Activated B cell treated with CpG ODN at 0.5 μM for 24 hours (primary cell): ENCODE measurements at regions of chr11 and their contacts with region 1.

Region 1: DNA sequence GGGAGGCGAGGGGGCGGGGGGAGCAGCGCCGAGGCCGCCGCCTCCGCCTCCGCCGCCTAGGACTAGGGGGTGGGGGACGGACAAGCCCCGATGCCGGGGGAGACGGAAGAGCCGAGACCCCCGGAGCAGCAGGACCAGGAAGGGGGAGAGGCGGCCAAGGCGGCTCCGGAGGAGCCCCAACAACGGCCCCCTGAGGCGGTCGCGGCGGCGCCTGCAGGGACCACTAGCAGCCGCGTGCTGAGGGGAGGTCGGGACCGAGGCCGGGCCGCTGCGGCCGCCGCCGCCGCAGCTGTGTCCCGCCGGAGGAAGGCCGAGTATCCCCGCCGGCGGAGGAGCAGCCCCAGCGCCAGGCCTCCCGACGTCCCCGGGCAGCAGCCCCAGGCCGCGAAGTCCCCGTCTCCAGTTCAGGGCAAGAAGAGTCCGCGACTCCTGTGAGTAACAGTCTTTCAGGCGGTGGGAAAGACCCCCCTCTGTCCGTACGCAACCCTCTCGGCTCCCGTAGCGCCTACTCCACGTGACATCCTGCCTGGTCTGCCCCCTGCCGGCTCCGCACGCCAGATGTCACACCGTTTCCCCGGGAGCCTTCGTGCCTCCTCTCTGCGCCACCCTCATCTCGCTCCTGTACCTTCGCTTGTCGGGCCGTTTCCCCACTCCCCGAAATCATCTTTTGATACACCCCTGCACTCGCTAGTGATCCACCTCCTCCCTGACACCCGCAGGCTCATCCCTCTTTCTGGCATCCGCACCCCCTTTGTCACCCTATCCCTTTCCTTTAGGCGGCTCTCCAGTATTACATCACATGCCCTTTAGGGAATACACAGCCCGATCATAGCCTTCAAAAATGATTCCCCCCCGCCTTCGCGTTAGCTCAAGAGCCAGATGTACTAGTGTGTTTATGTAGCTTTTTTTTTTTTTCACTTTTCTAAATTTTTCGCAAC is 598 bp downstream of the ZFP91 start:
- DNase-seq: peak; percentile 87
- ATAC-seq: peak; percentile 33
- H3K4me3 Mint-ChIP-seq: peak overlapping the region; percentile 96
- H3K27ac Mint-ChIP-seq: peak overlapping the region; percentile 100
- H3K4me1 Mint-ChIP-seq: peaks cover 79% of the 10 kb centered on the region
- H3K27me3 Mint-ChIP-seq: no peaks in the 10 kb centered on the region
- CTCF ChIP-seq: no peak

Region 2: GRCh38 chr11:57345555-57346211 is 1233.8 kb before region 1 on chr11:
- CTCF ChIA-PET with region 1: no interaction called
- POLR2A ChIA-PET with region 1: no interaction called
- intact Hi-C with region 1: loop called (anchors 5 kb)
- DNase-seq: peak; percentile 40
- ATAC-seq: peak; percentile 91
- H3K4me3 Mint-ChIP-seq: no peak overlapping the region
- H3K27ac Mint-ChIP-seq: no peak overlapping the region
- H3K4me1 Mint-ChIP-seq: peaks cover 3% of the 10 kb centered on the region
- H3K27me3 Mint-ChIP-seq: peaks cover 3% of the 10 kb centered on the region
- CTCF ChIP-seq: no peak

Region 3: DNA sequence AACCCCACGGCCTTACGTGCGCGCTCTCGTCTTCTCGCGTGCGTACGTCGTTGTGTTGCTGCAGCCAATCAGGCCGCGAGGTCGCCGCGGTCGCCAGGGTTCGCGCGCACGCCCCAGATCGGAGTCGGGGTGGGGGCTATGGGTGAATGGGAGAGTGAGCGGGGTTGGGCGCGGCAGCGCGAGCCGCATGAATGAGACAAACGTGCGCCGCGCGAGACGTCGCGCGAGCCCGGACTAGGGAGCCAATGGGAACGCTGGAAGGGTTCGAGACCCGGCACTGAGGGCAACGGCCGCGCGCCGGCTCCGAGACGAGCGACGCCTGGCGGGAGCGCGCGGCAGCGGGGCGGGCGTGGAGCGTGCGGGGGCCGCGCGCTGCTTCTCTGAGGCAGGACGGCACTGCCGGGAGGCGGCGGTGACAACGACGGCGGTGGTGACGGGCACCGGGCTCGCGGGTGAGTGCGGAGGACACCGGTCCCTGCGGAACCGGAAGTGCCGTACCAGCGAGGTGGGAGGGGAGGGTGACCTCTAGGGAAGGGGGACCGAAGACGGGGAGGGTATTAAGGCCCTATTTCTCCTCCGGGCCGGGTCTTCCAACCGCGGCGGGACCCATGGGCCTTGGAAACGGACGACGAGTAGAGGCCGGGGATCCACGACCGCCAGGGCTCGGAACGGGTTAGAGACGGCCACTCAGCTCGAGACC is 911.6 kb before region 1 on chr11 and contains the start of gene ZDHHC5:
- CTCF ChIA-PET with region 1: no interaction called
- POLR2A ChIA-PET with region 1: interaction called, 4 read pairs
- intact Hi-C with region 1: loop called (anchors 1 kb)
- DNase-seq: peak; percentile 97
- ATAC-seq: peak; percentile 80
- H3K4me3 Mint-ChIP-seq: peak within 1 kb of the TSS; percentile 89
- H3K27ac Mint-ChIP-seq: peak within 1 kb of the TSS; percentile 99
- H3K4me1 Mint-ChIP-seq: peaks cover 49% of the 10 kb centered on the region
- H3K27me3 Mint-ChIP-seq: no peaks in the 10 kb centered on the region
- CTCF ChIP-seq: no peak
- total RNA-seq, gene ZDHHC5: 50.9 and 60.7 TPM in 2 replicates

Region 4: GRCh38 chr11:58513747-58514367 is 65.6 kb before region 1 on chr11:
- CTCF ChIA-PET with region 1: no interaction called
- POLR2A ChIA-PET with region 1: no interaction called
- intact Hi-C with region 1: no loop called
- DNase-seq: no peak
- ATAC-seq: no peak
- H3K4me3 Mint-ChIP-seq: no peak overlapping the region
- H3K27ac Mint-ChIP-seq: no peak overlapping the region
- H3K4me1 Mint-ChIP-seq: no peaks in the 10 kb centered on the region
- H3K27me3 Mint-ChIP-seq: no peaks in the 10 kb centered on the region
- CTCF ChIP-seq: no peak

Region 5: DNA sequence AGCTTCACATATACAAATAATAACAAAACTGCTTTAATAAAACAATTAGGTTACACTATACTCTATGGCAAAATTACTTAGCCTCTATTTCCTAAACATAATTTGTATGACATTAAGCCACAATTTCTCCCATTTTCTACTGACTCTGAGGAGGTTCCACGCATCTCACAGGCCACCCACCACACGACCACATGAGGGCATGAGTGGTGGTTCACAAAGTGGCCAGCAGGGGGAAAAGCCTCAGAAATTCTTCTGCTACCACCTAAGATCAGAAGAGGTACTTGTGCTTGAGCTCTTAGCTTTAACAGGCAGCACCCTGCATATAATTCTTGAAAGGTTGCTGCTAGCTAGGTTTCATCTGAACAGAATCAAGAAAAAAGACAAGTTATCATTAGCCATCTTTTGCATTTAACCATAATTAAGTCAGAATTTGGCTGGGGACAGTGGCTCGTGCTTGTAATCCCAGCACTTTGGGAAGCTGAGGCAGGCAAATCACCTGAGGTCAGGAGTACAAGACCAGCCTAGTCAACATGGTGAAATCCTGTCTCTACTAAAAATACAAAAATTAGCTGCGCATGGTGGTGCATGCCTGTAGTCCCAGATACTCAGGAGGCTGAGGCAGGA is 11.5 kb before region 1 on chr11:
- CTCF ChIA-PET with region 1: interaction called, 30 read pairs
- POLR2A ChIA-PET with region 1: interaction called, 63 read pairs
- intact Hi-C with region 1: loop called (anchors 1 kb)
- DNase-seq: peak; percentile 54
- ATAC-seq: peak; percentile 99
- H3K4me3 Mint-ChIP-seq: no peak overlapping the region
- H3K27ac Mint-ChIP-seq: peak overlapping the region; percentile 36
- H3K4me1 Mint-ChIP-seq: peaks cover 40% of the 10 kb centered on the region
- H3K27me3 Mint-ChIP-seq: no peaks in the 10 kb centered on the region
- CTCF ChIP-seq: peak; percentile 53

Region 6: GRCh38 chr11:58745705-58746364 is 166.4 kb after region 1 on chr11:
- CTCF ChIA-PET with region 1: no interaction called
- POLR2A ChIA-PET with region 1: no interaction called
- intact Hi-C with region 1: no loop called
- DNase-seq: no peak
- ATAC-seq: no peak
- H3K4me3 Mint-ChIP-seq: no peak overlapping the region
- H3K27ac Mint-ChIP-seq: no peak overlapping the region
- H3K4me1 Mint-ChIP-seq: no peaks in the 10 kb centered on the region
- H3K27me3 Mint-ChIP-seq: peaks cover 21% of the 10 kb centered on the region
- CTCF ChIP-seq: no peak

Region 7: DNA sequence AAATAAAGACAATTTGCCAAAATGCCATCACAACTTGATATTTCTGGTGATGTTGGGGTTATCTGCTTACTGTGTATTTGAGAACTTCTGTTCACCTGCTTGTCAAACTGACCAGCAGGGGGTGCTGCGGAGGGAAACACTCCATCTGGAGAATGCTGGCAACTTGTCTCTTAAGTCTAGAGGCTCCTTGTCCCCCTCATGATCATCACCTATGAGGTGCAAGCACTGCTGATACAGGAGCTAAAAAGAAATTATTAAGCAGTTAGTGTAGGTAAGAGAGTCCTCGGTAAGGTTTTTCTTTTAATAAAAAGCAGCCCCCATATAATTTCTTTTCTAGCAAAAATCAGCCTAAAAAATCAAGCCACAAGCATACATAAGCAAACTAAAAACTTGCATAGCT is 473.9 kb after region 1 on chr11:
- CTCF ChIA-PET with region 1: interaction called, 5 read pairs
- POLR2A ChIA-PET with region 1: interaction called, 10 read pairs
- intact Hi-C with region 1: loop called (anchors 2 kb)
- DNase-seq: peak; percentile 45
- ATAC-seq: no peak
- H3K4me3 Mint-ChIP-seq: no peak overlapping the region
- H3K27ac Mint-ChIP-seq: peak overlapping the region; percentile 66
- H3K4me1 Mint-ChIP-seq: peaks cover 73% of the 10 kb centered on the region
- H3K27me3 Mint-ChIP-seq: no peaks in the 10 kb centered on the region
- CTCF ChIP-seq: no peak

Region 8: GRCh38 chr11:59164028-59164427 is 584.6 kb after region 1 on chr11:
- CTCF ChIA-PET with region 1: no interaction called
- POLR2A ChIA-PET with region 1: no interaction called
- intact Hi-C with region 1: no loop called
- DNase-seq: no peak
- ATAC-seq: no peak
- H3K4me3 Mint-ChIP-seq: no peak overlapping the region
- H3K27ac Mint-ChIP-seq: no peak overlapping the region
- H3K4me1 Mint-ChIP-seq: peaks cover 2% of the 10 kb centered on the region
- H3K27me3 Mint-ChIP-seq: no peaks in the 10 kb centered on the region
- CTCF ChIP-seq: no peak

Region 9: DNA sequence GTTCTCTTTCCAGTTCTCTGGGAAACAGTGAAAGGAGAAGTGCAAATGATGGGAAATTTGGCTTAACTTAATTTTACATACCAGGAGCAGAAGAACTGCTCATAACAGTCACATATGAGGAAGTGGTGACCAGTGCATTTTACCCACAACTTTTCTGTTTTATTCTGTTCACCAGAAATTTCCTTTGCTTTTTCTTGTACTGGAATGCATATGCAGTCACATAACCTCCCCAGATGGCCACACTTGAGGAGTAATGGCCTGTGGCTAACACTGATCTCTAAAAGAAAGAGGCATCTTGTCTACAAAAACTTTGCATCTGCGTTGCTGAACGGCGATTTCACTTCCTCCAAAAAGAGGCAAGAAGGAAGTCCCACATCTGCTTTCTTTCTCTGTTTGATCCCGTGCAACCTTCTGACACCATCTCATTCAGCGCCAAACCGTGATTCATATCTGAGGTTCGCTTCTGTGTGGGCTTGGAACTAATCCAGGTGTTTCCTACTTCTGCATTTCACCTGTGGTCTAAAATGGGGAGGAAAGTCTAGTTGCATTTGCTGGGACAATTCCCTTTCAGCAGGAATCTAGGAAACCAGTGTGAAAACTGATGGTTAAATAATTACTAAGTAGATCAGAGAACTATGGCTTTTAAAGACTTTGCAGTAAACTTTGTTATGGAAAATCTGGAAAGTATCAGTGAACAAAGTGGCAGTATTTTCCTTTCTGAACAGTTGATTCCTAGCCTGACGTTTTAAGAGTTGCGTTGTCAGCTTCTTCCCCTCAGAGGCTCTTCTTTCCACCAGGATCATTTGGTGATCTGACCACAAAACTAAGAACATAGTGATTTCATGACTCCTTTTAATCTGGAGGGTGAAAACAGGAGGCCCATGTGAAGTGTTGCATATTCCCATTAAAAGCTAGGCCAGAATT is 637.4 kb after region 1 on chr11:
- CTCF ChIA-PET with region 1: no interaction called
- POLR2A ChIA-PET with region 1: interaction called, 15 read pairs
- intact Hi-C with region 1: loop called (anchors 1 kb)
- DNase-seq: peak; percentile 35
- ATAC-seq: peak; percentile 69
- H3K4me3 Mint-ChIP-seq: peak overlapping the region; percentile 52
- H3K27ac Mint-ChIP-seq: peak overlapping the region; percentile 91
- H3K4me1 Mint-ChIP-seq: peaks cover 100% of the 10 kb centered on the region
- H3K27me3 Mint-ChIP-seq: no peaks in the 10 kb centered on the region
- CTCF ChIP-seq: no peak

Region 10: GRCh38 chr11:59668950-59669610 is 1089.6 kb after region 1 on chr11 and contains the start of gene PATL1:
- CTCF ChIA-PET with region 1: no interaction called
- POLR2A ChIA-PET with region 1: no interaction called
- intact Hi-C with region 1: loop called (anchors 1 kb)
- DNase-seq: peak; percentile 95
- ATAC-seq: peak; percentile 88
- H3K4me3 Mint-ChIP-seq: peak within 1 kb of the TSS; percentile 93
- H3K27ac Mint-ChIP-seq: peak within 1 kb of the TSS; percentile 97
- H3K4me1 Mint-ChIP-seq: peaks cover 27% of the 10 kb centered on the region
- H3K27me3 Mint-ChIP-seq: no peaks in the 10 kb centered on the region
- CTCF ChIP-seq: no peak
- total RNA-seq, gene PATL1: 42.0 and 45.1 TPM in 2 replicates